Left cardiac atrium (tissue), 4 donors: ENCODE measurements at regions of chr1 and their contacts with region 1.

Region 1: DNA sequence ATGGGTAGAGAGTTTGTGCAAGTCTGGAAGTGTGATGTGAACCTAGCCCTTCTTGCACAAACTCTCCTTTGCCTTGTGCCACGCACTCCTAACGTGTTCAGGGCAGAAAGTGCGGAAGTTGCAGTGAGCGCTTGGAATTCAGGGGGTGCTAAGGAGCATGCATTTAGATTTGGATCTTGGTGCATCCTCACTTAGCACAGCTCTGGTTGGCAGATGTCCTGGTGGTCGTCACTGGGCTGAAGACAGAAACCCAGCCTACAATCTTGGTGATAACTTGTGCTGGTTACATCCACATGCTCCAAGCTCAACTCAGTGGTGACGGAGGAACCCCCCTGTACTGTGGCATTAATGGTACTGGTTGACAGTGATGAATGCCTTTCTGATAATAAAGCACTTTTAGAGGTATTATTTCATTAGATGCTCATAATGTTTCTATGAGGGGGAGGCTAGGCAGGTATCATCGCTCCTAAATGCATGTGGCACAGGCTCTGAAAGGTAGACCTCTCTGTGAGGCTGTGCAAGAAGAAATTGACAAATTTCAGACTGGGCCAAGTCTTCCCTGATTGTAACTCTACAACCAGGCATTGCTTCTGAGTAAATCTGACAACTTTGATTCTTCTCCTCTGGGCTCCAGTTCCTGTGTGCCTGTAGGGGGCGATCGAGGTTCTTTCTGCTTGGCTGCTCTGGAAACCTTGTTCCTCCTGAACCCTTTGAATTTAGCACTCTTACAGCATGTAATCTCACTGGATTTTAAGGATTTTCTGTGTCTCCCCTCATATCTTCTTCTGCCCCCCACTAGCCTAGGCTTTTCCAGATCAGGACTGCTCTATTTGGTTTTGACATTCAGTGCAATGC is 40.6 kb downstream of the MAPKAPK2 start:
- DNase-seq: no peak
- ATAC-seq: no peak

Region 2: DNA sequence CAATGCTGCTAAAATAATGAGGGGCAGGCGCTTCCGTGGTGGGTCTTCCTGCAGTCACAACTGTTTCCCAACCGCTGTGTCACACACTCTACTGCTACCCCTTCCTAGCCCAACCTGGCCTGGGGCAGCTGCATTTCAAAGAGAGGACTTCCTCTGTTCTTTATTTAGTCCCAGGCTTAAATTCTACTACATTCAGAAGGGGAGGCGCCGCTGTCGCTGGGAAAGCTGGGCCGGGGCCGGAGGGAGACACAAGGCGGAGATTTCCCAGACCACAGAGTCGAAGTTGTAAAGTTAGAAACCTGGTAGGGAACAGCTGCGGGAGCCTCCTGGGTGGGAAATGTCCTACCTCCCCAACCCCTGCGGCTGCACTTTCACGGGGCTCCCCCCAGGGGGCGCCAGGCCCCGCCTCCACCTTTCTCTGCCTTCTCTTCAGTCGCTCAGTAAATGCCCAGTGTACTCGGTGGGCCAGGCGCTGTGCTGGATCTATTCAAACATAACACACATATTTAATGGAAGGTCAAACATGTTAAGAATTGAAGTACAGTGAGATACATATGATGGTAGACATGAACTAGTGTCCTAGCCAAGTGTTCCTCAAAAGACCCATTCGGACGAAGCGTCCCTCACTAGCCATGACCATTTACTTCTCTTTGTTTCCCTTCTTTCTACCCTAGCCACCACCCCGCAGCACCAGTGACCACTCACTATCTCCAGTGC is 66.9 kb before region 1 on chr1:
- intact Hi-C with region 1: loop called in 1 of 2 experiments (anchors 10 kb)
- DNase-seq: peak; percentile 40
- ATAC-seq: peak; percentile 42 to 60

Region 3: DNA sequence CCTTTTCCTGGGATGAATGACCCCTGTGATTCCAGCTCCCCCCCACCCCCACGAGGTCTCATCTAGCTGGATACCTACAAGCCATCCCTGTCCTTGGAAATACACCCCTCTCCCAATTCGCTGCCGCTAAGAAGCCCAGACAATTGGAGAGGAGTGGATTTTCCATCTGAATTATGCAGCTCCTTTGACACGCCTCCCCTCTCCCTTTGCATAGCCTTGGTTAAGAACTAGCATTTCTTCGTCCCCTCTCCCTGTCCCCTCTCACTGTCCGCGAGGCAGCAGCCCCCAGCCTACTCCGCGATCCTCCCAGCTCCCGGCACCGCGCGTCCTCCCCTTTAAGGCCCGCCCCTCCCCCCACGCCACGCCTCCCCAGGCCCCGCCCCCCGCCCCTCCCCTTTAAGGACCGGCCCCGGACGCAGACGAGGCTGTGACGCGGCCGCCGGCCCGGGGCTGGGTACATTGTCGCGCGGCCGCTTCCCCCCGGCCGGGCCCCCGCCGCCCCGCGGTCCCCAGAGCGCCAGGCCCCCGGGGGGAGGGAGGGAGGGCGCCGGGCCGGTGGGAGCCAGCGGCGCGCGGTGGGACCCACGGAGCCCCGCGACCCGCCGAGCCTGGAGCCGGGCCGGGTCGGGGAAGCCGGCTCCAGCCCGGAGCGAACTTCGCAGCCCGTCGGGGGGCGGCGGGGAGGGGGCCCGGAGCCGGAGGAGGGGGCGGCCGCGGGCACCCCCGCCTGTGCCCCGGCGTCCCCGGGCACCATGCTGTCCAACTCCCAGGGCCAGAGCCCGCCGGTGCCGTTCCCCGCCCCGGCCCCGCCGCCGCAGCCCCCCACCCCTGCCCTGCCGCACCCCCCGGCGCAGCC is 40.6 kb before region 1 on chr1 and contains the start of gene MAPKAPK2:
- intact Hi-C with region 1: loop called in 1 of 2 experiments (anchors 5 kb)
- DNase-seq: peak; percentile 87
- ATAC-seq: peak; percentile 77 to 90
- total RNA-seq, gene MAPKAPK2: 154 to 219 TPM

Region 4: GRCh38 chr1:206808615-206809014 is 83.3 kb after region 1 on chr1:
- intact Hi-C with region 1: loop called in 1 of 2 experiments (anchors 5 kb)
- DNase-seq: no peak
- ATAC-seq: peak; percentile 44 to 70